Sigmoid colon (tissue), 7 donors: ENCODE measurements at regions of chr6 and their contacts with region 1.

Region 1: DNA sequence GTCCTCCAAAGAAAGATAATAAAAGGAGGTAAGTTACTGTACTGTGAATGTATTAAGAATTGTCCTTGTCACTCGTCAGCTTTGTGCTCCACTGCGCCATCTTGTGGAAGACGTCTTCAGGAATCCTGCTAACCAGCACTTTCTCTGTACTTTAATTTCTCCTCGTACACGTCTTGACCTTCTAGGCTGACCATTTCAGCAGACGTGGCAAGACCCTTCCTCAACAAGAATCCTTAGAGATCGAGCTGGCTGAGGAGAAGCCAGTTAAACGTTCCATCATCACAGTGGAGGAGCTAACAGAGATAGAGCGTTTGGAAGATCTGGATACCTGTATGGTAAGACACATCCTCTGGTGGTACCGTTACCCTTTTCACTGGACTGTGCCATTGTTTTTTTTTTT is 95.5 kb upstream of the SCGN start:
- DNase-seq: peak; percentile 79
- H3K4me3 ChIP-seq: no peak overlapping the region
- H3K27ac ChIP-seq: no peak overlapping the region
- H3K4me1 ChIP-seq: no peaks in the 10 kb centered on the region
- H3K27me3 ChIP-seq: no peaks in the 10 kb centered on the region
- CTCF ChIP-seq: peak in 3 of 4 experiments; percentile 51 to 70 (median 61)
- EP300 ChIP-seq: no peak
- POLR2A ChIP-seq: no peak

Region 2: DNA sequence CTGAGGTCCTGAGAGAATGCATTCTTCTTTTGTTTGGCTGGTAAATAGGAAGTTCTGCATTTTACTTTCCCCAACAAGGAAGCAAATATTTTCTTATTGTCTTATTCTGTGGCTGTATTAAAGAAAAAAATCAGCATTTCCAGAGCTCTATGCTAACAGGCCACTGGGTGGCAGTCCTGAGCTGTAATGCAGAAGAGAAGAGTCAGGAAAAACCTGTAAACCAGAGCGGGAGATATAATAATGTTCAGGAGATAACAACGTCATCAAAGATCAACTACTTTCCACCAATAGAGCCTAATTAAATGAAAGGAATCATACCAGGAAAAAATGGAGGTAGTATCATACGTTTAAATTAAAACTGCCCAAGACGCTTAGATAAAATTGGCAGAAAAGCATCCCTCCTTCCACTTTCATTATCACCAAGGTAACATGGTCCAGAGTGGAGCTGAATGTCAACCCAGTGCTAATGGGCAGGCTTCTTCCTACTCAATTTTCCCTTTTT is 333.0 kb before region 1 on chr6:
- intact Hi-C with region 1: loop called (anchors 5 kb)
- DNase-seq: no peak
- H3K4me3 ChIP-seq: peak overlapping the region in 3 of 4 donors; percentile 11 to 34 (median 28)
- H3K27ac ChIP-seq: no peak overlapping the region
- H3K4me1 ChIP-seq: peaks cover 0 to 8% (median 5%) of the 10 kb centered on the region in 4 donors
- H3K27me3 ChIP-seq: no peaks in the 10 kb centered on the region
- CTCF ChIP-seq: peak; percentile 49 to 82 (median 75)
- EP300 ChIP-seq: no peak
- POLR2A ChIP-seq: no peak

Region 3: GRCh38 chr6:25278914-25279747 is 277.4 kb before region 1 on chr6 and contains the start of gene CARMIL1:
- intact Hi-C with region 1: loop called (anchors 5 kb)
- DNase-seq: peak; percentile 87
- H3K4me3 ChIP-seq: peak within 1 kb of the TSS; percentile 55 to 71 (median 66)
- H3K27ac ChIP-seq: peak within 1 kb of the TSS; percentile 16 to 66 (median 58)
- H3K4me1 ChIP-seq: peaks cover 0 to 25% (median 20%) of the 10 kb centered on the region in 4 donors
- H3K27me3 ChIP-seq: peaks cover 0 to 12% (median 0%) of the 10 kb centered on the region in 3 donors
- CTCF ChIP-seq: peak; percentile 17 to 62 (median 46)
- EP300 ChIP-seq: no peak
- POLR2A ChIP-seq: peak in 1 of 2 donors; percentile 16
- total RNA-seq, gene CARMIL1: 3.4 to 8.2 (median 7.4) TPM

Region 4: DNA sequence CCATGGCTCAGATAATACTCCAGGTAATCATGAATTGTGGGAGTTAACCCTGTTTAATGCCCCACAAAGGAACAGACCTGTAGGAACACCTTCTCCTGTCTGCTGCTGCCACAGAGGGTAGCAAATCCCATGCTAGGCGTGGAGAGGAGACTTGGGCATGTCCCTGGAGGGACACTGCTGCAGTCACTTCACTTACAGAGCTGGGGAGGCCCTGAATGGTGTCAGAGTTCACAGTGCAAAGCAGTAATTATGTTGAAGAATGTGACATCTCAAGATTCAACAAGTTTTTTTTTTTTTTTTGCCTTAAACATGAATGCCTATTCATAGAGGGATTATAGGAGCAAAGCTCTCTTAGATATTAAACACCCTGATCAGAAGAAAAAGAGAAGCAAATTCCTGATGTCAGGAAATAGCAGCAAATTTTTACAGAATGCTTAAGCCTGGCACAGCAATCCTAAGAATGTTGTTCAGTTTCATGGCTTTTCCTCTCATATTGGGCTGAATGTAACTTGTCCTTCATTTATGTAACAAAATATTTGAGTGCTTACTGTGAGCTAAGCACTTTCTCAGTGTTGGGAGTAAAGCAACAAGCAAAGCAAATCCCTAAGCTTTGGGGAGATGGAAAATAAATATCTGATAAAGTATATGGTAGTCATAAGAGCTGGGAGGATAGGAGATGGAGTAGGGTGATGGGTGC is 232.3 kb before region 1 on chr6:
- intact Hi-C with region 1: no loop called
- DNase-seq: no peak
- H3K4me3 ChIP-seq: no peak overlapping the region
- H3K27ac ChIP-seq: no peak overlapping the region
- H3K4me1 ChIP-seq: no peaks in the 10 kb centered on the region
- H3K27me3 ChIP-seq: no peaks in the 10 kb centered on the region
- CTCF ChIP-seq: no peak
- EP300 ChIP-seq: no peak
- POLR2A ChIP-seq: no peak